Gastrocnemius medialis (tissue), 4 donors: ENCODE measurements at regions of chr16 and their contacts with region 1.

Region 1: GRCh38 chr16:85286970-85287824 is 174.9 kb upstream of the CIBAR2 start:
- DNase-seq: peak; percentile 49 to 78
- ATAC-seq: peak; percentile 45 to 51
- H3K4me3 ChIP-seq: peak overlapping the region; percentile 25 to 37 (median 31)
- H3K27ac ChIP-seq: peak overlapping the region; percentile 78 to 91 (median 82)
- H3K4me1 ChIP-seq: peaks cover 21% of the 10 kb centered on the region in 2 donors
- H3K27me3 ChIP-seq: no peaks in the 10 kb centered on the region
- CTCF ChIP-seq: no peak
- POLR2A ChIP-seq: peak in 1 of 2 donors; percentile 35

Region 2: DNA sequence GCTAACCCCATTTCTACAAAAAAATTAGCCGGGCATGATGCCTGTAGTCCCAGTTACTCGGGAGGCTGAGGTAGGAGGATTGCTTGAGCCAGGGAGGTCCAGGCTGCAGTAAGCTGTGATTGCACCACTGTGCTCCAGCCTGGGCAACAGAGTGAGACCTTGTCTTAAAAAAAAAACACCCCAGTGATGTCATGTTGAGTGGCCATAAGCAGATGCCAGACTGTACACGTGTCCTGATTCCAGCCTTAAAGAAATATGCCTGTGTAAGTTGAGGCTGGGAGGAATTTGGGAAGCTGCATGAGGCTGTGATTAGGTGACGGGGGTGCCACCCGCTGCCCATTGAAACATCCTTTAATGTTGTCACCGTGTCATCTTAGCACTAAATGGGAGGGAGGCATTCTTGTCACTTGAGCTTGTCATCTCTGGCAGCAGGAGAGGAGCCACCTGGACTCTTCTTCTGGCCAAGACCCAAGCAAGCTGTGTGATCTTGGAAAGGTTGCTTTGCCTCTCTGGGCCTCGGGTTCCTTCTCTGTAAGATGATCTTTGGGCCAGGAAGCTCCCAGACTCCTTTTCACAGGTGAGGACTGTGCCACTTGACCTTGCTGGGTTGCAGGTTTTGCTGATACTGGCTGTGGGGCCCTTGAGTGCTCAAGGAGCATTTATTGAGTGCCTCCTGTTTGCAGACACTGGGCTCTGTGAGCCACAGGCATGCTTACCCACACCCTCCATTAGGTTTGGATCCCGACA is 76.6 kb before region 1 on chr16:
- in situ Hi-C with region 1: no loop called
- intact Hi-C with region 1: loop called (anchors 5 kb)
- DNase-seq: no peak
- ATAC-seq: no peak
- H3K4me3 ChIP-seq: no peak overlapping the region
- H3K27ac ChIP-seq: peak overlapping the region in 2 of 4 donors; percentile 61 to 88
- H3K4me1 ChIP-seq: peaks cover 67 to 91% of the 10 kb centered on the region in 2 donors
- H3K27me3 ChIP-seq: no peaks in the 10 kb centered on the region
- CTCF ChIP-seq: no peak
- POLR2A ChIP-seq: no peak

Region 3: GRCh38 chr16:85275533-85276249 is 11.5 kb before region 1 on chr16:
- in situ Hi-C with region 1: no loop called
- intact Hi-C with region 1: no loop called
- DNase-seq: peak; percentile 50 to 57
- ATAC-seq: peak; percentile 51 to 68
- H3K4me3 ChIP-seq: no peak overlapping the region
- H3K27ac ChIP-seq: no peak overlapping the region
- H3K4me1 ChIP-seq: peaks cover 9 to 10% of the 10 kb centered on the region in 2 donors
- H3K27me3 ChIP-seq: no peaks in the 10 kb centered on the region
- CTCF ChIP-seq: peak; percentile 85 to 95 (median 91)
- POLR2A ChIP-seq: no peak

Region 4: DNA sequence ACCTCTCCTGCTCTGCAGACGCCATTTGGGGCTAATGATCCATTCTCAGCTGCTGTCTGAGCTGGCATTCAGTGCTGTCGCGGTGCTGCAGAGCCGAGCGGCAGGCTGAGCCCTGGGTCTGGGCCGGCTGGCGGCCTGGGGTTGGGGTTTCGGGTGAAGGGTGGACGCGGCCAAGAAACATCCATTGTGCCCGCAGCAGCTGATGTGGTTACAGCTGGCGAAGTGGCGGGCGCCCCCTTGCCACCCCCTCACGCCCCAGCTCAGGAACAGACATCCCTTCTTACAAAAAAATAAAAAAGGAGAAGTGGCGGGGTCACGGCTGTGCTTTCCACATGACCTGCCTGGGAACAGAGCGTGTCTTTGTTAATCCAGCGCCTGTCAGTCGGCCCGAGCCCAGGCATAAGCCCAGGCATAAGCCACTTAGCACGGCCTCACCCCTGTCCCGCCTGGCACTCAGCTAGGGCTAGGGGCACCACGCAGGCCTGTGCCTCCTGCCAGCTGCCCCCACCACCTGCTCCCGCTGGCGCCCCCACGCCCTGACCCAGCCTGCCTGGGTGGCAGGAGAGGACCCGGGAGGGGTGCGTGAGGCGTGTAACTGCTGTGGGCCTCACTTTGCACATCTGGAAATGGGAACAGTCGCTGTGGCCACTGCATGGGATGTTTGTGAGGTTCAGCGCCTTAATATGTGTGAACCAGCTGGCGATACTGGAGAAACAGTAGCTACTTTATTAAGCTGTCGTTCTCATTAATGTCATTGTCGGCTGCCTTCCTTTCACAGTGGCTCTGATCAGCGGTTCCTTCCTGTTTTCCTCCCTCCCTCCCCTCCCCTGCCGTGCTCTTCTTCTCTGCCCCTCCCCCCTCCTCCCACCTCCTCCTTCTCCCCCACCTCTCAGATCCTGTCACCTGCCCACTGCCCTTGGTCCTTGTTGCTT is 22.7 kb after region 1 on chr16:
- in situ Hi-C with region 1: no loop called
- intact Hi-C with region 1: loop called (anchors 2 kb)
- DNase-seq: peak; percentile 79 to 82
- ATAC-seq: peak; percentile 62 to 63
- H3K4me3 ChIP-seq: peak overlapping the region in 2 of 4 donors; percentile 15 to 31
- H3K27ac ChIP-seq: peak overlapping the region; percentile 63 to 92 (median 80)
- H3K4me1 ChIP-seq: peaks cover 78 to 84% of the 10 kb centered on the region in 2 donors
- H3K27me3 ChIP-seq: no peaks in the 10 kb centered on the region
- CTCF ChIP-seq: no peak
- POLR2A ChIP-seq: peak; percentile 39 to 53

Region 5: DNA sequence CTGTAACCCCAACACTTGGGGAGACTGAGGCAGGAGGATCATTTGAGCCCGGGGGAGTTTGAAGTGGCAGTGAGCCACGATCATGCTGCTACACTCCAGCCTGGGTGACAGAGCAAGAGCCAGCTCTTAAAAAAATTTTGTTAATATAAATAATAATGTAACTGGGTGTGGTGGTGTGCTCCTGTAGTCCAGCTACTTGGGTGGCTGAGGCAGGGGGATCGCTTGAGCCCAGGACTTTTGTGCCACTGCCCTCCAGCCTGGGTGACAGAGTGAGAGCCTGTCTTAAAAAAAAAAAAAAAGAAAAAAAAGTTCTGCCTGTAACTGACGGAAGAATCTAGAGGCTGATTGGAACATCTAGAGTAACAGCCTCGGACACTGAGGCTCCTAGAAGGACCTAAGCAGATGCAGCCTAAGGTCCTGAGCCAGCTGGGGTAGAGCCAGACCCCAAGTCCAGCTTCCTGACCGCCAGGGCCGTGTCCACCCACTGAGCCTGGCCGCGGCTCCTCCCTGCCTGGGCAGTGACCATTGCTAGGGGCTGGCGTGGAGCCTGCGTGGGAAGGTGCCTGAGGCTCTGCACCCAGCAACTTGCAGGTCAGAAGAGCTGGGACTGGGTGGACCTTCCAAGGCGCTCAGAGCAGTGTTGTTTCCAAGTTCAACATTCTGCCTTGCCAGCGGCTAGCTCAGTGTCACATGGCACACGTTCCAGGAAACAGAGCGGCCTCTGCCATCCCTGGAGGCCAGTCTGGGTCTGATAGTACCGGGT is 34.5 kb after region 1 on chr16:
- in situ Hi-C with region 1: no loop called
- intact Hi-C with region 1: loop called (anchors 2 kb)
- DNase-seq: peak; percentile 98 to 99
- ATAC-seq: peak; percentile 90 to 91
- H3K4me3 ChIP-seq: peak overlapping the region in 1 of 4 donors; percentile 22
- H3K27ac ChIP-seq: peak overlapping the region; percentile 86 to 93 (median 90)
- H3K4me1 ChIP-seq: peaks cover 34 to 36% of the 10 kb centered on the region in 2 donors
- H3K27me3 ChIP-seq: no peaks in the 10 kb centered on the region
- CTCF ChIP-seq: no peak
- POLR2A ChIP-seq: peak in 1 of 2 donors; percentile 12

Region 6: GRCh38 chr16:85360323-85361277 is 73.4 kb after region 1 on chr16:
- in situ Hi-C with region 1: no loop called
- intact Hi-C with region 1: loop called (anchors 2 kb)
- DNase-seq: peak; percentile 82 to 90
- ATAC-seq: peak; percentile 85
- H3K4me3 ChIP-seq: no peak overlapping the region
- H3K27ac ChIP-seq: peak overlapping the region; percentile 55 to 68 (median 66)
- H3K4me1 ChIP-seq: peaks cover 9 to 12% of the 10 kb centered on the region in 2 donors
- H3K27me3 ChIP-seq: no peaks in the 10 kb centered on the region
- CTCF ChIP-seq: no peak
- POLR2A ChIP-seq: peak in 1 of 2 donors; percentile 43

Region 7: GRCh38 chr16:85554112-85554813 is 267.1 kb after region 1 on chr16:
- in situ Hi-C with region 1: no loop called
- intact Hi-C with region 1: loop called (anchors 10 kb)
- DNase-seq: peak; percentile 55 to 66
- ATAC-seq: peak; percentile 26 to 32
- H3K4me3 ChIP-seq: peak overlapping the region; percentile 88 to 98 (median 94)
- H3K27ac ChIP-seq: peak overlapping the region; percentile 95 to 96 (median 96)
- H3K4me1 ChIP-seq: peaks cover 34 to 37% of the 10 kb centered on the region in 2 donors
- H3K27me3 ChIP-seq: no peaks in the 10 kb centered on the region
- CTCF ChIP-seq: no peak
- POLR2A ChIP-seq: no peak

Region 8: GRCh38 chr16:85610508-85611332 is 323.5 kb after region 1 on chr16:
- in situ Hi-C with region 1: no loop called
- intact Hi-C with region 1: loop called (anchors 5 kb)
- DNase-seq: peak; percentile 74 to 83
- ATAC-seq: peak; percentile 24 to 31
- H3K4me3 ChIP-seq: peak overlapping the region; percentile 66 to 96 (median 81)
- H3K27ac ChIP-seq: peak overlapping the region; percentile 91 to 99 (median 95)
- H3K4me1 ChIP-seq: peaks cover 34 to 35% of the 10 kb centered on the region in 2 donors
- H3K27me3 ChIP-seq: no peaks in the 10 kb centered on the region
- CTCF ChIP-seq: peak; percentile 99 to 100 (median 99)
- POLR2A ChIP-seq: no peak